Sigmoid colon (tissue), 7 donors: ENCODE measurements at regions of chr17 and their contacts with region 1.

Region 1: DNA sequence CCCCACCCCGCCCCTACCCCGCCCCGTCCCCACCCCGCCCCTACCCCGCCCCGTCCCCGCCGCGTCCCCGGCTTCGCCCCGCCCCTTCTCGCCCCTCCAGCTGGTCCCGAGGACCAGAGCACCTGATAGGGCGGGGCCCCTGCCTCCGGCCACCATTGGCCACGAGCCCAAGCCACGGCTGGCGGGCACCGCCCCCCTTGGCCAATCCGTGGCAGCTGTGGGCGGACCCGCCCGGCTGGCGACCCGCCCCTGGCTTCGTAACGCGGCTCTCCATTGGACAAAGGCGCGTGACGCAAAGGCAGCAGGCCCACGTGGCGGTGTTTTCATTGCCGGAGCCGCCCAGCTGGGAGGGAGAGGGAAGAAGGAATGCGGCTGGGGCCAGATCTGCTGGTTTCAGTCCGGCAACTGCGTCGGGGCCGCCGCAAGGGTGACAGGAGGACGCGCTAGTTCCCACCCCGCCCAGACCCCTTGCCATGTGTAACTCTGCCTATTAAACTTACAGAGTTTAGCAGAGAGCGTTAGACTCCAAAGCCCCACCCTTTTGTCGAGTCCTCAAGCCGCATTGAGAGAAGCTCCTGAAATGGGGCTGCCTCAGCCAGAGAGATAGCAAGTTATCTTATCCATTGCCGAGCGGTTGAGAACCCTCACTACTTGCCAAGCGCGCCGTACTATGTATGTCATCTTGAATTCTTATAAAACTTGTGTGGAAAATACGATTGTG is 403 bp upstream of the WIPI1 start:
- DNase-seq: peak; percentile 99
- H3K4me3 ChIP-seq: peak overlapping the region; percentile 37 to 88 (median 84)
- H3K27ac ChIP-seq: peak overlapping the region; percentile 96 to 98 (median 97)
- H3K4me1 ChIP-seq: peaks cover 0 to 23% (median 17%) of the 10 kb centered on the region in 4 donors
- H3K27me3 ChIP-seq: no peaks in the 10 kb centered on the region
- CTCF ChIP-seq: no peak
- EP300 ChIP-seq: peak in 2 of 4 donors; percentile 26 to 83
- POLR2A ChIP-seq: peak; percentile 66 to 81

Region 2: GRCh38 chr17:68172461-68172954 is 285.2 kb before region 1 on chr17:
- intact Hi-C with region 1: loop called (anchors 5 kb)
- DNase-seq: peak; percentile 78
- H3K4me3 ChIP-seq: no peak overlapping the region
- H3K27ac ChIP-seq: no peak overlapping the region
- H3K4me1 ChIP-seq: no peaks in the 10 kb centered on the region
- H3K27me3 ChIP-seq: no peaks in the 10 kb centered on the region
- CTCF ChIP-seq: peak; percentile 72 to 98 (median 92)
- EP300 ChIP-seq: no peak
- POLR2A ChIP-seq: no peak

Region 3: GRCh38 chr17:68247445-68248198 is 210.1 kb before region 1 on chr17 and contains the start of gene AMZ2:
- intact Hi-C with region 1: loop called (anchors 5 kb)
- DNase-seq: peak; percentile 96
- H3K4me3 ChIP-seq: peak within 1 kb of the TSS; percentile 80 to 91 (median 80)
- H3K27ac ChIP-seq: peak within 1 kb of the TSS; percentile 95 to 99 (median 98)
- H3K4me1 ChIP-seq: peaks cover 0 to 21% (median 11%) of the 10 kb centered on the region in 4 donors
- H3K27me3 ChIP-seq: no peaks in the 10 kb centered on the region
- CTCF ChIP-seq: no peak
- EP300 ChIP-seq: no peak
- POLR2A ChIP-seq: peak; percentile 67 to 79
- total RNA-seq, gene AMZ2: 55.9 to 80.1 (median 62.8) TPM

Region 4: DNA sequence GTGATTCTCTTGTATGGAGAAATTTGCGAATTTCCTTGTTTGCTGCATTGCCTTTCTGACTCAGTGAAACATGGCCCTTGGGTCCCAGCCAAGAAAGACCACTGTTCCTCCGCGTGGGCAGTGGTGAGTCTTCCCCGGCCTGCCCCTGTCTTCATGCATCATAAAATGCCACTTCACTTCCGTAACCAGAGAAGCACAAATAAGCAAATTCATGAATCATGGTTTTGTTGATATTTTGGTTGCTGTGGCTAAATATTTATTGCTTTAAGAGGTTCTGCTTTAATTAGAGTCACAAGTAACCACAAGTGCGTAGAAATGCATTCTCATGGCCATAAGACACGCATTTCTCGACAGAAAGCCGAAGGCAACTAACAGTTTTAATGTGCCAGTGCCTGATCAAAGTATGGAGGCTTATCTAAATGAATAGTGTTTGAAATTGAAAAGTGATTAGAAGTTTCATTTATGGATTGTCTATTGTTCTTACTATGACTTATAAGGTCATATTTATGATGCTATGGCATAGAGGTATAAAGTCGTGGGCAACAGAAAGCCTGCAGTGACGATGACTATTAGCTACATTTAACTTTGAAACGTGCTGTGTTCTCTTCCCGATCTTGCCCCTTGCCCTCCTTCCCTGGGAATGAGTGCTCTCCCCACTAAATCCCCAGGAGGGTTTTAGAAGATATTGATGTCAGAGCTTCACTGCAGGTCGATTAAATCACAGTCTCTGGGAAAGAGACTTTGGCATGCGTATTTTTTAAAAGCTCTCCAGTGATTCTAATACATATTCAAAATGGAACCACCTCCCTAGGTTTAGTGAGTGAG is 76.4 kb before region 1 on chr17:
- intact Hi-C with region 1: loop called (anchors 5 kb)
- DNase-seq: peak; percentile 17
- H3K4me3 ChIP-seq: no peak overlapping the region
- H3K27ac ChIP-seq: no peak overlapping the region
- H3K4me1 ChIP-seq: peaks cover 0 to 29% (median 27%) of the 10 kb centered on the region in 4 donors
- H3K27me3 ChIP-seq: no peaks in the 10 kb centered on the region
- CTCF ChIP-seq: no peak
- EP300 ChIP-seq: no peak
- POLR2A ChIP-seq: no peak

Region 5: DNA sequence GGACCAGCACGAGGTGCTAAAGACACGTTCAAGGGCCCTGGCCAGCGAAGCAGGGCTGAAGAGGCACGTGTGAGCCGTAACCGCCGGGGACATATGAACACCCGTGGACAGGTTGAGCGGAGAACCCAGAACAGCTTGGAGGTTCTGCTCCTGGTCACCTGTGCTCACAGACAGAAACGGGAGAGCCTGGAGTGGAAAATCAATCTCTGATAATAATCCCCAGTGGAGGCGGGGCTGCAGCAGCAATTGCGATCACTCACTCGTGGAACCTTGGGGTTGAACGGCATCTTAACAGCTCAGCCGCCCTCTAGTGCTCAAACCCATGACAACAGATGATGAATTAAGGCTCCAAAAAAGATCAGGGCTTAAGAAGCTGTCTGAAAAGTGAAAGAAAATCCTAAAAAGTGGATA is 26.0 kb before region 1 on chr17:
- intact Hi-C with region 1: no loop called
- DNase-seq: no peak
- H3K4me3 ChIP-seq: no peak overlapping the region
- H3K27ac ChIP-seq: no peak overlapping the region
- H3K4me1 ChIP-seq: peaks cover 0 to 8% (median 5%) of the 10 kb centered on the region in 4 donors
- H3K27me3 ChIP-seq: no peaks in the 10 kb centered on the region
- CTCF ChIP-seq: no peak
- EP300 ChIP-seq: no peak
- POLR2A ChIP-seq: no peak

Region 6: GRCh38 chr17:68759343-68760132 is 301.8 kb after region 1 on chr17:
- intact Hi-C with region 1: loop called (anchors 10 kb)
- DNase-seq: peak; percentile 94
- H3K4me3 ChIP-seq: peak overlapping the region in 3 of 4 donors; percentile 27 to 40 (median 28)
- H3K27ac ChIP-seq: peak overlapping the region; percentile 59 to 75 (median 64)
- H3K4me1 ChIP-seq: peaks cover 0 to 11% (median 3%) of the 10 kb centered on the region in 4 donors
- H3K27me3 ChIP-seq: no peaks in the 10 kb centered on the region
- CTCF ChIP-seq: peak; percentile 61 to 85 (median 76)
- EP300 ChIP-seq: no peak
- POLR2A ChIP-seq: no peak

Region 7: GRCh38 chr17:69047368-69048263 is 589.9 kb after region 1 on chr17:
- intact Hi-C with region 1: no loop called
- DNase-seq: peak; percentile 87
- H3K4me3 ChIP-seq: no peak overlapping the region
- H3K27ac ChIP-seq: peak overlapping the region in 3 of 4 donors; percentile 17 to 53 (median 51)
- H3K4me1 ChIP-seq: no peaks in the 10 kb centered on the region
- H3K27me3 ChIP-seq: no peaks in the 10 kb centered on the region
- CTCF ChIP-seq: no peak
- EP300 ChIP-seq: peak in 1 of 4 donors; percentile 18
- POLR2A ChIP-seq: no peak